ENCODE measurements at regions of chr20 and their contacts with region 1.

Region 1: DNA sequence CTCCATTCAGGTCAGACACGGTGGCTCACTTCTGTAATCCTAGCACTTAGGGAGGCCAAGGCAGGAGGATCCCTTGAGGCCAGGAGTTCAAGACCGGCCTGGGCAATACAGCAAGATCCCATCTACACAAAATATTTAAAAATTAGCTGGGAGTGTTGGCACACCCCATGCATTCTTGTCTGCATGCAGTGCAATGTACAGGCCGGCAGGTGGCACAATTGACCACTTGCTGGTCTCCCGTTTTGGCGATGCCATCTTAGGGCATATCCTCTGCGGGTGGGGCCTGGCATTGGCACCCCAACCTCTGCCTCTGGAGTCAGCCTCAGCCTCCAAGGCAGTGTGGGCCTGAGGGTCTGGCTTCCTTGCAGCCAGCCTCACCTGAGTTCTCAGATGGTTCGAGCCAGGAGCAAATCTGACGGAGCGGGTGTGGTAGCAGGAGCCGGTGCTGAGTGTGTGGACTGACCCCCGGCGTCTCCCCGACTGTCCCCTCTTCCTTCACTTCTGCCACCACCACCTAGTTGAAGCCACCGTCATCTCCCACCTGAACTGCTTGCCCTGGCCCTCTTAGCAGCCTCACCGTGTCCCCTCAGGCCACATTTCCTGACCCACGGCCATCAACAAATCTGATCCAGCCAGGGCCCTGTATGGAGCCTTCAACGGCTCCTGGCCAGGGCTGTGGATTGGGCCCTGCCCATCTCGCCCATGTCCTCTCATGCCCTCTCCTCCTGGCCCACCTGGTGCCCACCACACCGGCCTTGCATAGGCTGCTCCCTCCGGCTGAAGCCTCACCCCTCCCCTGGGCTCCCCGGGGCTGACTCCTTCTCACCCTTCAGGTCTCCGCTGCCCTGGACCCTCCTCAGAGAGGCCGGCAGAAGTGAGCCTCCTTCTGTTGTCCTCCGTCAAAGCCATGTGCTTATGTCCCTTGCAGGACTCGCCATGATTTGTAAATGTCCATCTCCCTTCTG is 44.0 kb downstream of the EFCAB8 start:
- DNase-seq: peak; percentile 46 to 68
- ATAC-seq: peak; percentile 64 to 83 (median 72)
- H3K4me3 ChIP-seq: no peak overlapping the region
- H3K27ac ChIP-seq: no peak overlapping the region
- H3K4me1 ChIP-seq: no peaks in the 10 kb centered on the region
- H3K27me3 ChIP-seq: no peaks in the 10 kb centered on the region
- CTCF ChIP-seq: peak; percentile 90

Region 2: DNA sequence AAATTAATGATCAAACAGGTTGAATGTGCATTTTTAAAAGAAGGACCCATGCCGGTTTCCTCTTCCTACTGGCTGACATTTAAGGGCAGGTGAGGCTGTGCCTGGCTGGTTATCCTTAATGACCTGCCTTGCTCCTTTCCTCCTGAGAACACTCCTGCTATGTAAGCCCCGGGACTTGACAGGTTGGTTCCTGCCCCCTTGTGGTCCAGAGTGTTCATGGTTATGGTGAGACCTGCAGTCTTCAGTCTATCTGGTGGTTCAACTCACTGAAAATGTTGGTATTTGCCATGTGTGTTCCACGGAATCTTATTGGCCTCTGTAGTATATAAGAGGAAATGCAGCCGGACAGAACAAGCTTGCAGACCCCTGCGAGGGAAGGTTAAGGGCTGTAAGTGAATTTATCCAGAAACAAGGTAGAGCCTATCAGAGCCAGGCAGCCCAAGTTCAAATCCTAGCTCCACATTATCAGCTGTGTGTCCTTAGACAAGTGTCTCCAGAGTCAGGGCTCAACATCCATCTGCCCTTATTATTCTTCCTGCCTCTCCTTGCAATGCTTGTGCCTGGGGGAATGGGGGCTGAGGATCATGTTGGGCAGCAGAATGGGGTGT is 309.2 kb after region 1 on chr20:
- intact Hi-C with region 1: loop called in 1 of 2 experiments (anchors 5 kb)
- DNase-seq: no peak
- ATAC-seq: no peak
- H3K4me3 ChIP-seq: no peak overlapping the region
- H3K27ac ChIP-seq: no peak overlapping the region
- H3K4me1 ChIP-seq: no peaks in the 10 kb centered on the region
- H3K27me3 ChIP-seq: peaks cover 0 to 16% (median 9%) of the 10 kb centered on the region in 3 donors
- CTCF ChIP-seq: no peak

Measured in psoas muscle (tissue), 8 donors.